AG04450 (cell line): ENCODE measurements at regions of chr11 and their contacts with region 1.

Region 1: GRCh38 chr11:19561011-19561410 is 151.6 kb upstream of the NAV2 start:
- DNase-seq: no peak
- H3K4me3 ChIP-seq: no peak overlapping the region
- H3K27ac ChIP-seq: no peak overlapping the region
- H3K27me3 ChIP-seq: peaks cover 13% of the 10 kb centered on the region
- CTCF ChIP-seq: no peak

Region 2: GRCh38 chr11:19577976-19578619 is 17.1 kb after region 1 on chr11:
- CTCF ChIA-PET with region 1: interaction called, 18 read pairs
- POLR2A ChIA-PET with region 1: no interaction called
- DNase-seq: no peak
- H3K4me3 ChIP-seq: no peak overlapping the region
- H3K27ac ChIP-seq: peak overlapping the region; percentile 52
- H3K27me3 ChIP-seq: peaks cover 2% of the 10 kb centered on the region
- CTCF ChIP-seq: no peak

Region 3: DNA sequence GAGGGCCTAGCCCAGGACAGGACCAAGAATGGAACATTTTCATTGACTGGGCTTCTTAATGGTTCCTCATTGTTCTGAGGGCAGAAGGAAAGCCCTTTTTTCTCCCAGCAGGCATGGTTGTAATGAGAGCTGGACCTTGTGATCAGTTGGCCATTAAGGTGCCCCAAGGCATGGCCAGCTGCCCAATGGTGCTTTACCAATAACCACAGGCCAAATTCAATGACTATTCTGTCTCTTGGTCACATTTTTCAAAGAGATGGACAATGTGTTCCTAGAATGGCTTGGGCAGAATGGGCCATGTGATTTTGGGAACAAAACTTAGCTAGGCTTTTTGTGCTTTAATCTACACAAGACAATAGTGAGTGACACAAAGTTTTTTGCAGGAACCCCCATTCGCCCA is 158.9 kb after region 1 on chr11:
- CTCF ChIA-PET with region 1: interaction called, 10 read pairs
- POLR2A ChIA-PET with region 1: no interaction called
- DNase-seq: no peak
- H3K4me3 ChIP-seq: no peak overlapping the region
- H3K27ac ChIP-seq: no peak overlapping the region
- H3K27me3 ChIP-seq: no peaks in the 10 kb centered on the region
- CTCF ChIP-seq: no peak

Region 4: GRCh38 chr11:19753451-19754106 is 192.6 kb after region 1 on chr11:
- CTCF ChIA-PET with region 1: interaction called, 12 read pairs
- POLR2A ChIA-PET with region 1: no interaction called
- DNase-seq: no peak
- H3K4me3 ChIP-seq: no peak overlapping the region
- H3K27ac ChIP-seq: no peak overlapping the region
- H3K27me3 ChIP-seq: no peaks in the 10 kb centered on the region
- CTCF ChIP-seq: no peak